ENCODE measurements at regions of chr4 and their contacts with region 1.

Region 1: GRCh38 chr4:133084421-133084820 is 64.7 kb upstream of the PCDH10 start:
- DNase-seq: no peak
- H3K4me3 ChIP-seq: no peak overlapping the region
- H3K27ac ChIP-seq: no peak overlapping the region
- H3K4me1 ChIP-seq: no peaks in the 10 kb centered on the region
- H3K27me3 ChIP-seq: no peaks in the 10 kb centered on the region
- CTCF ChIP-seq: no peak
- EP300 ChIP-seq: no peak
- POLR2A ChIP-seq: no peak

Region 2: DNA sequence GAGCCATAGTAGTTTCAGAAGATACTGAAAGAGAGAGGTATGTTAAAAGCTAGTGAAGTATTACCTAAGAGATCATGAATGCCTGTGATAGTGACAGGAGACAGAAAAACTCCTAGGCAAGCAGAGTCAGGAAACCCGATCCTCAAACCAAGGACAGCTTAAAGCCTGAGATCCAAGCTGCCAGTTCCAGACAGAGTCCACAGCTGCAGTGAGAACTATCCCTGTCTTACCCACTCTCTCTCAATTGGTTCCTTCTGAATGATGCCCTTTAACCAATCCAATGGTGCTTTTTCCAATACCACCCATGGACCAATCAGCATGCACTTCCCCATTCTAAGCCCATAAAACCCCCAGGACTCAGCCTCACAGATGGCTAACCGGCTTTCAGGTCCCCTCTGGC is 25.7 kb before region 1 on chr4:
- in situ Hi-C with region 1: no loop called
- intact Hi-C with region 1: loop called (anchors 1 kb)
- DNase-seq: no peak
- H3K4me3 ChIP-seq: no peak overlapping the region
- H3K27ac ChIP-seq: no peak overlapping the region
- H3K4me1 ChIP-seq: no peaks in the 10 kb centered on the region
- H3K27me3 ChIP-seq: no peaks in the 10 kb centered on the region
- CTCF ChIP-seq: no peak
- EP300 ChIP-seq: no peak
- POLR2A ChIP-seq: no peak

Region 3: DNA sequence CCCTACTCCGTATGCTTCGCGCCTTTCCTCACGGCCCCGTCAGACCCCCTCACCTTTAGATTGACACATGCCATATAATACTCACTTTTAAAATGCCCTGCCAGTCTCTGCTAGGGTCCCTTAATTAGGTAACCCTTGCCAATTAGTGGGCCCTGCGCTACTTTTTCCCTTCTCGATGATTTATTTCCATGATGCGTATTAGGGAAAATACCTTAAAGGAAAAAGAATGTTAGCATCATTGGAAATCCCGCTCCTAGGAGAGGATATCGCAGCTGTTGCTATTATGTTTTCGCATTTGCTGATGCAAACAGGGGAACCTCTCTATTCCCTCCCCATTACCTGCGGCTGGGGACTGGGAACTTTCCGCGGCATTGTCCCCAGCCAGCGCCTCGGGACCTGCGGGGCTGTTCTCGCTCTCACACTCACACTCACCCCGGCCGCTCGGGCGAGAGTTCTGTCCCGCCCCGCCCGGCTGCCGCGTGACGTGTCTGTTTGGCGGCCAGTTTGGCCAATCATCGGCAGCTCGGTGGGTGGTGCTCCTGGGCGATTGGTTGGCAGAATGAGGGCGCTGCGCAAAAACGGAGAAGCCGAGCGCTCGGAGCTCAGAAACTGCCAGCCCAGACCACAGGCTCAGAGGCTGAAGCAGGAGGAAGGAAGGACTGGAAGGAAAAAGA is 64.4 kb after region 1 on chr4 and contains the start of gene PCDH10:
- in situ Hi-C with region 1: no loop called
- intact Hi-C with region 1: no loop called
- DNase-seq: peak; percentile 73
- H3K4me3 ChIP-seq: peak within 1 kb of the TSS; percentile 18 to 37 (median 25)
- H3K27ac ChIP-seq: no peak within 1 kb of the TSS
- H3K4me1 ChIP-seq: peaks cover 0 to 59% (median 18%) of the 10 kb centered on the region in 4 donors
- H3K27me3 ChIP-seq: peaks cover 97% of the 10 kb centered on the region
- CTCF ChIP-seq: no peak
- EP300 ChIP-seq: no peak
- POLR2A ChIP-seq: no peak
- total RNA-seq, gene PCDH10: 0.27 to 0.60 (median 0.43) TPM

Measured in transverse colon (tissue), 4 donors.